Activated CD4-positive, alpha-beta memory T cell treated with anti-CD3 and anti-CD28 coated beads, Interleukin-2, amount 10 ng/mL, durations not matched to agents 7 days and 5 days (primary cell): ENCODE measurements at regions of chr3 and their contacts with region 1.

Region 1: GRCh38 chr3:32438596-32439344 is 47.1 kb downstream of the CMTM7 start:
- DNase-seq: peak; percentile 27
- H3K4me3 Mint-ChIP-seq: peak overlapping the region; percentile 37
- H3K27ac Mint-ChIP-seq: peak overlapping the region; percentile 84
- H3K4me1 Mint-ChIP-seq: peaks cover 69% of the 10 kb centered on the region
- H3K27me3 Mint-ChIP-seq: no peaks in the 10 kb centered on the region

Region 2: DNA sequence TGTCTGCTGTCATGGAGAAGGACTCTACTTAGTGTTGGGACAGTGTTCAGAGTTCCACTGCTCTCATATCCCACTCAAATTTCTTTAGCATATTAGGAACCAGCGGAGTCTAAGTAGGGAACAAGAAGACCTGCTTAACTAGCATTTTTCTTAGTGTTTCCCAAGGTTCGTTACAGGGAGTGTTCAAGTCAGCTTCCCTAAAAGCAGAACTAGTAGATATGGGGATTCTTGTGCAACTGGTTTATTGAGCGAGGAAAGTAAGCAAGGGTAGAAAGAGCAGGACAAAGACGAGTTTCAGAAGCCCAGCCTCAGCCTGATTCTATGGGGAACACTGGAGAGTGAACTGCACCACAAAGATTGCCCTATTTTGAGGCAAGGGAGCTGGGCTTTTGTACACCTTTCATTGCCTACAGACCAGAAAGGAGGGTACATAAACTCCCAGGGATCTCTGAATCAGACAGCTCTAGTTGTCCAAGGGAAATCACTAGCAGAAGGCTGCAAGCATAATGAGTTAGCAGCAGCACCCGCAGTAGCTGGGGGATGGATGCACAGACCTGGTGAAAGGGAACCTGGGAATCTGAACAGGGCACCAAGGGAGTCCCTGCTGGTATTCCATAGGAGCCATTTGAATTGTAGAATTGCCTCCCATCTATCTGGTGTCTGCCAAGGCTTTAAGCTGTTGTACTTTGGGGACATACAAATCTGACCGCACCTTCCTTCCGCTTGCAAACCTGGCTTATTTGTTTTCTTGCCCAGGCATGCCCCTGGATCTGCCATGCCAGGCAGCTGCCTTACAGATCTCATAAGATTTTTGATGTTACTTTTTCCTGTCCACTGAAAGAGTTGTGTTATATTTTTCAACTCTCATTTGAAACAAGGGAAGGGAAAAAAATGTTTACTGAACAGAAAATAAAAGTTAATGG is 32.0 kb before region 1 on chr3:
- CTCF ChIA-PET with region 1: no interaction called
- POLR2A ChIA-PET with region 1: no interaction called
- DNase-seq: no peak
- H3K4me3 Mint-ChIP-seq: no peak overlapping the region
- H3K27ac Mint-ChIP-seq: no peak overlapping the region
- H3K4me1 Mint-ChIP-seq: peaks cover 40% of the 10 kb centered on the region
- H3K27me3 Mint-ChIP-seq: no peaks in the 10 kb centered on the region

Region 3: GRCh38 chr3:32421991-32422859 is 16.5 kb before region 1 on chr3:
- CTCF ChIA-PET with region 1: interaction called, 4 read pairs
- POLR2A ChIA-PET with region 1: interaction called, 37 read pairs
- DNase-seq: no peak
- H3K4me3 Mint-ChIP-seq: no peak overlapping the region
- H3K27ac Mint-ChIP-seq: no peak overlapping the region
- H3K4me1 Mint-ChIP-seq: peaks cover 86% of the 10 kb centered on the region
- H3K27me3 Mint-ChIP-seq: no peaks in the 10 kb centered on the region